K562 (cell line): ENCODE measurements at regions of chr5 and their contacts with region 1.

Region 1: DNA sequence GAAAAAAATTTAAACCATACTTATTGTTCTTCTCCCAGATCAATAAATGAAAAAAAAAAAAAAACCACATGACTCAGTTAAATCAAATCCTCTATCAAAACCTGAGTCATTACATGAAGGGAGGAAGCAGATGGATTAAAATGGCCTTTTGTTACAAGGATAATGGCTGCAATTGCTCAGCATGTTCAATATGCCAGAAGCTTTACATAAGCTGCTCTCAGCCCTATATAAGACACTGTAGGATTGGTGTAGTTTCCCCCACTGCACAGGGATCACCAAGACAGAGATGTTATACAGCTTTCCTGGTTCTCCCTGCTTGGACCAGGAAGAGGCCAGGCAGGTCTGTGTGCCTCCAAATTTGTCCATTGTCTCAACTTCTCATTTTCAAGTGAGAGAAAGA is 101.6 kb upstream of the MAP1B start:
- DNase-seq: no peak
- ATAC-seq: no peak
- H3K4me3 ChIP-seq: no peak overlapping the region
- H3K27ac ChIP-seq: no peak overlapping the region
- H3K4me1 ChIP-seq: no peaks in the 10 kb centered on the region
- H3K27me3 ChIP-seq: peaks cover 6 to 11% of the 10 kb centered on the region in 2 experiments; a peak in 4 of 5 replicates
- CTCF ChIP-seq: no peak
- EP300 ChIP-seq: no peak
- POLR2A ChIP-seq: no peak
- RAD21 ChIP-seq: no peak

Region 2: GRCh38 chr5:71830681-71831539 is 174.8 kb before region 1 on chr5:
- CTCF ChIA-PET with region 1: no interaction called
- POLR2A ChIA-PET with region 1: no interaction called
- in situ Hi-C with region 1: no loop called
- intact Hi-C with region 1: loop called (anchors 10 kb)
- DNase-seq: no peak
- ATAC-seq: no peak
- H3K4me3 ChIP-seq: no peak overlapping the region
- H3K27ac ChIP-seq: no peak overlapping the region
- H3K4me1 ChIP-seq: no peaks in the 10 kb centered on the region
- H3K27me3 ChIP-seq: peaks cover 0 to 2% of the 10 kb centered on the region in 2 experiments; a peak in 3 of 5 replicates
- CTCF ChIP-seq: no peak
- EP300 ChIP-seq: no peak
- POLR2A ChIP-seq: no peak
- RAD21 ChIP-seq: no peak

Region 3: DNA sequence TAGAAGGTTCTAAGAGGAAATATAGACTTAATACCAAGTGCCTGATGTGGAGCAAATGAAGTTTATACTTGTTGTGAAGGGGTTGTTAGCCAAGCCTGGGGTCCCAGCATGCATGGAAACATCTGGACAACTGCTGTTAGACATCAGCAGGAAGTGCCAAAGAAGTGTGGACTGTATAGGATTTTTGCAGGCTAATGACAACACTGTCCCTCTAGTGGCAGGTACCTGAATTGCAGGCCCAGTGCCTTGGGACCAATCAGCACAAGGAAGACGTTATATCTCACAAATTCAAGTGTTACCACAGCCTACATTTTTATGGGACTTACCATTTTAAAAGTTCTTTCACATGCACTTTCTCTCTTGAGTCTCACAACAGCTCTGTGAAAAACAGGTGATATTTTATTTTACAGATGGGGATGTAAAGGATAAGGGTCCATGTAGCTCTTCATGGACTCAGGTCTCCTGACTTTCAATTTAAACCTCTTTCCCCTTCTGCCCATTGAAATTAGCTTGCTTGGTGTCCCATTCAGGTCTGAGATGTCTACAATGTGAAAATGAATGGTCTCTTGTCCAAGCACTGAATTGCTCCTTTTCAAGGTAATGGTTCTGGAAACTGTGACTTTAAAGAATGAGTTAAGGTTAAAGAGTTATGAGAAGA is 12.6 kb after region 1 on chr5:
- CTCF ChIA-PET with region 1: no interaction called
- POLR2A ChIA-PET with region 1: no interaction called
- in situ Hi-C with region 1: no loop called
- intact Hi-C with region 1: no loop called
- DNase-seq: peak; percentile 66 to 75 (median 70)
- ATAC-seq: peak; percentile 93
- H3K4me3 ChIP-seq: no peak overlapping the region
- H3K27ac ChIP-seq: no peak overlapping the region
- H3K4me1 ChIP-seq: peaks cover 0 to 6% of the 10 kb centered on the region in 2 experiments; a peak in 2 of 5 replicates
- H3K27me3 ChIP-seq: peaks cover 0 to 8% of the 10 kb centered on the region in 2 experiments; a peak in 2 of 5 replicates
- CTCF ChIP-seq: peak; percentile 75 to 97 (median 89)
- EP300 ChIP-seq: no peak
- POLR2A ChIP-seq: no peak
- RAD21 ChIP-seq: peak; percentile 54 to 73

Region 4: DNA sequence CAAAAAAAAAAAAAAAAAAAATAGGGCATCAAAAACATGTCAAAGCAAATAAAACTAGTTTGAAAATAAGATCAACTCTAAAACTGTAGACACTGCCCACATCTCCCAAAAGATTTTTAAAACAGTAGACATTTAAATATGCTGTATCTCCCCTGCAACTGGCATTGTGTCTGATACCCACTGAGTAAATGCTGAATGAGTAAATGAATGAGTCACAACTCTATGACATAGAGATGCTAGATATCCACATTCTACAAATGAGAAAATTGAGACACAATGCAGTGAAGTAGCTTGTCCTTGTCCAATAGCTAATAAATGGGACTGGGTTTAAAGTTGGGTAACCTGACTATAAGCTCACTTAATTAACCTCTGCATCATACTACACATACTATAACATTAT is 87.5 kb after region 1 on chr5:
- CTCF ChIA-PET with region 1: no interaction called
- POLR2A ChIA-PET with region 1: no interaction called
- in situ Hi-C with region 1: no loop called
- intact Hi-C with region 1: no loop called
- DNase-seq: no peak
- ATAC-seq: no peak
- H3K4me3 ChIP-seq: no peak overlapping the region
- H3K27ac ChIP-seq: no peak overlapping the region
- H3K4me1 ChIP-seq: no peaks in the 10 kb centered on the region
- H3K27me3 ChIP-seq: peaks cover 11 to 23% of the 10 kb centered on the region in 2 experiments
- CTCF ChIP-seq: no peak
- EP300 ChIP-seq: no peak
- POLR2A ChIP-seq: no peak
- RAD21 ChIP-seq: no peak